Breast epithelium (tissue), 4 donors: ENCODE measurements at regions of chr2 and their contacts with region 1.

Region 1: DNA sequence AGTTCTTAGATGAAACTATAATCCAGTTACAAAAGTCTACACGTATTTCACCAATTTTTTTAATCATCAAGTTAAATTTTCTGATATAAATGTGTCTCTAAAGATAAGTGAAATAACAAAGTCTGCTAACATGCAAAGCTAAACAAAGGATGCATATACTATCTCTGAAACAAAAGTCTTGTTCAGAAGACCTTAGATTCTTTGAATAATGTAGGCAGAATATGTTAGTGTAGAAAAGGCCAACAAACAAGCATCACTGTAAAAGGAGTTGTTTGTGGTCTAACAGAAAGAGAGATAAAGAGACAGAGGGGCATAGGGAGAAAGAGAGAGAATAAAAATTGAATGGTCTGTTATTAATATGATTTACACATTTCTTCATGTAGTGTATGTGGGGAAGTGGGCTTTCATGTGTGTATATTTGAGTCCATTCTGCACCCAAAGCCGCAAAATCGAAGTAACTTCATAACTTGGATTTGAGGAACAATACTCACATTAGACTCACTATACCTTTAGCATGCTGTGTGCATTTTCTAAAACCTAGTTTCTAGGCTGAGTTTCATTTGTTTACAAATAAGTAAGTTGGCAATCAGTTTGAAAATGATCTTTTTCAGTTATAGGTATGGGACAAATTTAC is 734.8 kb upstream of the REG3G start:
- DNase-seq: no peak
- H3K4me3 ChIP-seq: no peak overlapping the region
- H3K27ac ChIP-seq: no peak overlapping the region
- H3K4me1 ChIP-seq: no peaks in the 10 kb centered on the region
- H3K27me3 ChIP-seq: no peaks in the 10 kb centered on the region
- CTCF ChIP-seq: no peak
- POLR2A ChIP-seq: no peak

Region 2: GRCh38 chr2:78218066-78218465 is 72.6 kb before region 1 on chr2:
- intact Hi-C with region 1: loop called (anchors 2 kb)
- DNase-seq: no peak
- H3K4me3 ChIP-seq: no peak overlapping the region
- H3K27ac ChIP-seq: no peak overlapping the region
- H3K4me1 ChIP-seq: no peaks in the 10 kb centered on the region
- H3K27me3 ChIP-seq: no peaks in the 10 kb centered on the region
- CTCF ChIP-seq: no peak
- POLR2A ChIP-seq: no peak